ENCODE measurements at regions of chr1 and their contacts with region 1.

Region 1: DNA sequence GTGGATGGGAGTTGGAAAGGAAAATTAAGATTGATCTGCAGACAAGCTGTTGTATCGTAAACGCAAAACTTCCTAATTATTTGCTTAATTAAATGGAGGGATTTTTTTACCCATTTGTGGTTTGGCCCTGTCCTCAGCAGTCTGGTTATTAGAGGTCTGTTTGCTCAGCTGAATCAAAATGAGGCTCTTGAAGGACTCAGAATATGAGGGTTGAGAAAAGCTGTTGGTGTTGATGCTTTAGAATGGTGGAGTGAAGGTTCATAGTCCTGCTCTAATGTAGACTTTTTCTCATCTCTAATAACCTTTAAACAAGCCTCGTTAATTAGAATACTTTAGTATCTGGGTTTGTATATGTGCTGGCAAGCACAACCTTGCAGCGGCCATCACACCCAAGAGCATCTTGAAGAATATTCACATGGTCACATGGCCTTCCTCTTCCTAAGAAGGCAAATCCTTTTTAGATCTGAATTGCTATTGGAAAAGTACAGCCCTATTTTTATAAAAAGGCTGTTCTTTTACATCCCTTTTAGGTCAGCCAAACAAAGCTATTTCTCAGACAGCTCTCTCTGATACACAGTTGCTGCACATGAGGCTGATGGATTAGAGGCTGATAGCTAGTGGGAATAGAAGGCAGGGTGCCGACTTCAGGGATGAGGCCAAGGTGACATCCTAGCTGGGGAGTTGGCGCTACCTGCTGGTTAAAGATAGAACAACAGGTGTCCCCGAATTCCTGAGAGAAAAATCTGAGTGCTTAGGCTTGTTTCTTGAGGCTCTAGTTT is 53.8 kb downstream of the MACF1 start:
- DNase-seq: peak; percentile 33
- H3K4me3 Mint-ChIP-seq: no peak overlapping the region
- H3K27ac Mint-ChIP-seq: peak overlapping the region; percentile 46
- H3K4me1 Mint-ChIP-seq: peaks cover 32% of the 10 kb centered on the region
- H3K27me3 Mint-ChIP-seq: no peaks in the 10 kb centered on the region

Region 2: GRCh38 chr1:39098546-39099250 is 159.6 kb before region 1 on chr1:
- intact Hi-C with region 1: loop called (anchors 1 kb)
- DNase-seq: peak; percentile 53
- H3K4me3 Mint-ChIP-seq: no peak overlapping the region
- H3K27ac Mint-ChIP-seq: peak overlapping the region; percentile 40
- H3K4me1 Mint-ChIP-seq: peaks cover 30% of the 10 kb centered on the region
- H3K27me3 Mint-ChIP-seq: peaks cover under 1% of the 10 kb centered on the region

Region 3: DNA sequence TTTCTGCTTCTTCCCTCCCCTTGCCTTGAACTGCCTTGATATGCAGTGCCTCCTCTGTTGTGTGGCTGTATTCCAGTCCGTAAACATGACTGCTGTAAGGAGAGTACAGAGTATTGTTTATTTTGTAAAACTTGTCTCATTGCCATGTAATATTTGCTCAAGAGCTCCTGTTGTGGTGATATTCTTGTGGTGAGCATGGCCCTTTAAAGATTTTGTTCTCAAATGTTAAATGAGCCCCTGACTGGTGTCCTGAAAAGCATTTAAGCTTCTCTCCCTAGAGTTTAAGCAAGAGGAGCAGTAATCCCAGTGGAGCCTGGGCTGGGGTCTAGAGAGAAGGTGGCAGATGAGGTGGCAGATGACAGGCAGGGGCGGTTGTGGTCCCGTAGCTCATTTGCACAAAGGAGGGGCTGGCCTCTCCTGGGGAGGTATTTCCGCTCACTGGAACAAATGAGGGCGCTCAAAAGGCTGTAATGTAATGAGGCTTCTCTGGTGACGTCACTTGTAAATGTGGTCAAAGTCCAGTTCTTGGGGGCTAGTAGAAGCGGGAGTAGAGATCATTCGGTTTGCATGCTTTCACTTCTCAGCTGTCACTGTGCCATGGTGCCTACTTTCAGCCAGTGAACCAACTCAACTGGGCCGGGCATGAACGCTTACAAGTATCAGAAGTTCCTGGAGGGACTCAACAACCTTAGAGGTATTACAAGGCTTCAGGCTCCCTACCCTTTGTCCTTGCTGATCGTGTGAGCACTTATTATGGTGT is 99.8 kb before region 1 on chr1:
- intact Hi-C with region 1: no loop called
- DNase-seq: no peak
- H3K4me3 Mint-ChIP-seq: no peak overlapping the region
- H3K27ac Mint-ChIP-seq: no peak overlapping the region
- H3K4me1 Mint-ChIP-seq: peaks cover 26% of the 10 kb centered on the region
- H3K27me3 Mint-ChIP-seq: peaks cover 10% of the 10 kb centered on the region

Region 4: DNA sequence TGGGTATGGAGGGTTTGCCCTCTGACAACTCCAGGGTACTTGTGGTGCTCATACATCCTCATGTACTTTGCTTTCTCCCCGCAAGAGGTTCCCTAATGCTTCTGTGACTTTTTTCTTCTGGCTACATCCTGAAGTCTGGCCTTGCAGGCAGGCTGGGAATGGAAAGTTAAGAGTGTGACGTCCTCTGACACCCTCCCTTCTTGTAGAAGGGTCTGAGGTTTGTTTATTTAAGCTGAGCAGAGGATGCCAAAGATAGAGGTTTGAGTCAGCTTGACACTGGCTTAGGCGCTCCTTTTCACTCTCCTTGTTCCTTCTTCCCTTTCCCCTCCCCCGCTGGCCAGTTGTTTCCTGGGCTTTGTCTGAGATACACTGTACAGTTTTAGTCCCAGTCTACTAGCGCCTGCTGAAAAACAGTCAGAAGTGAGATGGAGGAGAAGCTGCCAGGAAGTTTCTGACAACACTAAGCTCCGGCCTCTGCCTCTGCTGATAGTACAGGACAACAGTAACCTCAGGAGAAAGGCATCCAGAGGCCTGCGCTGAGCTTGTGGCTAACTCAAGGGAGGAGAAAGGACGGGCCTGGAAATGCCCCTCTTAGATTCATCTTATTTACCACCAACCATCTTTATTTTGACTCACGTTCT is 53.8 kb before region 1 on chr1 and contains the start of gene MACF1:
- intact Hi-C with region 1: loop called (anchors 2 kb)
- DNase-seq: peak; percentile 34
- H3K4me3 Mint-ChIP-seq: peak within 1 kb of the TSS; percentile 94
- H3K27ac Mint-ChIP-seq: peak within 1 kb of the TSS; percentile 98
- H3K4me1 Mint-ChIP-seq: peaks cover 50% of the 10 kb centered on the region
- H3K27me3 Mint-ChIP-seq: no peaks in the 10 kb centered on the region
- total RNA-seq, gene MACF1: 224 and 226 TPM in 2 replicates

Region 5: GRCh38 chr1:39269791-39270342 is 11.5 kb after region 1 on chr1:
- intact Hi-C with region 1: loop called (anchors 1 kb)
- DNase-seq: no peak
- H3K4me3 Mint-ChIP-seq: peak overlapping the region; percentile 43
- H3K27ac Mint-ChIP-seq: peak overlapping the region; percentile 38
- H3K4me1 Mint-ChIP-seq: peaks cover 77% of the 10 kb centered on the region
- H3K27me3 Mint-ChIP-seq: no peaks in the 10 kb centered on the region

Region 6: GRCh38 chr1:39525366-39526165 is 267.2 kb after region 1 on chr1:
- intact Hi-C with region 1: no loop called
- DNase-seq: peak; percentile 51
- H3K4me3 Mint-ChIP-seq: no peak overlapping the region
- H3K27ac Mint-ChIP-seq: peak overlapping the region; percentile 52
- H3K4me1 Mint-ChIP-seq: peaks cover 8% of the 10 kb centered on the region
- H3K27me3 Mint-ChIP-seq: no peaks in the 10 kb centered on the region

Measured in activated T-helper 1 cell treated with anti-CD3 and anti-CD28 coated beads, Interleukin-12 subunit alpha, Interleukin-12 subunit beta, Interleukin-2, Interleukin-4 antibody, amounts not matched to agents 30 ng/mL and 10 ng/mL and 1 ng/mL, durations not matched to agents 14 hours and 24 hours and 36 hours (primary cell).